ENCODE measurements at regions of chr12 and their contacts with region 1.

Region 1: GRCh38 chr12:8734873-8735381 is 37.1 kb downstream of the RIMKLB start:
- DNase-seq: no peak
- H3K4me3 ChIP-seq: no peak overlapping the region
- H3K27ac ChIP-seq: no peak overlapping the region
- H3K4me1 ChIP-seq: no peaks in the 10 kb centered on the region
- H3K27me3 ChIP-seq: no peaks in the 10 kb centered on the region
- CTCF ChIP-seq: no peak
- EP300 ChIP-seq: no peak
- POLR2A ChIP-seq: no peak
- RAD21 ChIP-seq: no peak

Region 2: GRCh38 chr12:8722286-8722685 is 12.6 kb before region 1 on chr12:
- CTCF ChIA-PET with region 1: interaction called, 4 read pairs
- POLR2A ChIA-PET with region 1: interaction called, 17 read pairs
- DNase-seq: no peak
- H3K4me3 ChIP-seq: peak overlapping the region in 1 of 4 experiments; percentile 5; a peak in 1 of 8 replicates
- H3K27ac ChIP-seq: no peak overlapping the region
- H3K4me1 ChIP-seq: peaks cover 2 to 18% (median 15%) of the 10 kb centered on the region in 4 experiments
- H3K27me3 ChIP-seq: no peaks in the 10 kb centered on the region
- CTCF ChIP-seq: no peak
- EP300 ChIP-seq: no peak
- POLR2A ChIP-seq: no peak
- RAD21 ChIP-seq: no peak